ENCODE measurements at regions of chr3 and their contacts with region 1.

Region 1: DNA sequence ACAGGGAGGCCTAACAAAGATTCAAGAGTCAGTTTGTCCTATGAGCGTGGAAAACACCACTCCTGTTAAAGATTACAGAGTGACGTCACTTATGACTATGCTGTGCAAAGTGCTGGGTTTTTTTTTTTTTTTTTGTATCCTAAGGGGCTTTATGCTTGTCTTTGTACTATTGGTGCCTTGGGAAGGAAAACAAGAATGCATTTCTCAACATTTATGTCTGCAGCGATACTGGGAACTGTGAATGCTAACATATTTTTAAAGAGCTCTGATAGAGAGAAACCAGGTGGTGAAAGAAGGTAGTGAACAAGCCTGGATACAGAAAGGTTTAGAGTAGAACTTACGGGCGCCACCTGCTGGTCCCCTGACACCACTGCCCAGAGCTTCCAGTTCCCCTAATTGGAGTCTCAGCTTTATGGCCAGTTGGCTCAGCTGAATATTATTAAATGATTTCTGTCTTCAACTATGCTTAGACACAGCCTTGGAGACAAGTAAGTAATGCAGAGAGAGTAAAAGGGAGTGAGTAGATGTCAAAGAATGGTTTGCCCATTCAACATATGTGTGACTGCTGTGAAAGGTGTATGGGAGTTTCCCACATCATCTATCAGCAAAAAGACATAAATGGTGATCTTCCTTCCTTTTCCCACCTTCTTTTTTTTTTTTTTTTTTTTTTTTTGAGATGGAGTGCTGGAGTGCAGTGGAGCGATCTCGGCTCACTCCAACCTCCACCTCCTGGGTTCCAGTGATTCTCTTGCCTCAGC is 807.9 kb upstream of the CFAP20DC start:
- DNase-seq: no peak
- H3K4me3 ChIP-seq: no peak overlapping the region
- H3K27ac ChIP-seq: no peak overlapping the region
- H3K4me1 ChIP-seq: peaks cover 0 to 8% (median 0%) of the 10 kb centered on the region in 4 donors
- H3K27me3 ChIP-seq: no peaks in the 10 kb centered on the region
- CTCF ChIP-seq: peak; percentile 89 to 95 (median 91)
- EP300 ChIP-seq: no peak
- POLR2A ChIP-seq: no peak

Region 2: GRCh38 chr3:59212128-59212779 is 645.5 kb before region 1 on chr3:
- intact Hi-C with region 1: loop called (anchors 5 kb)
- DNase-seq: no peak
- H3K4me3 ChIP-seq: no peak overlapping the region
- H3K27ac ChIP-seq: no peak overlapping the region
- H3K4me1 ChIP-seq: no peaks in the 10 kb centered on the region
- H3K27me3 ChIP-seq: peaks cover 0 to 16% (median 0%) of the 10 kb centered on the region in 4 donors
- CTCF ChIP-seq: peak; percentile 67 to 71 (median 67)
- EP300 ChIP-seq: no peak
- POLR2A ChIP-seq: no peak

Region 3: GRCh38 chr3:59818033-59818920 is 39.5 kb before region 1 on chr3:
- intact Hi-C with region 1: no loop called
- DNase-seq: peak; percentile 94
- H3K4me3 ChIP-seq: peak overlapping the region in 3 of 4 donors; percentile 2 to 12 (median 10)
- H3K27ac ChIP-seq: peak overlapping the region; percentile 59 to 74 (median 68)
- H3K4me1 ChIP-seq: peaks cover 14 to 29% (median 24%) of the 10 kb centered on the region in 4 donors
- H3K27me3 ChIP-seq: no peaks in the 10 kb centered on the region
- CTCF ChIP-seq: no peak
- EP300 ChIP-seq: no peak
- POLR2A ChIP-seq: no peak

Region 4: GRCh38 chr3:60333710-60334109 is 475.9 kb after region 1 on chr3:
- intact Hi-C with region 1: no loop called
- DNase-seq: no peak
- H3K4me3 ChIP-seq: no peak overlapping the region
- H3K27ac ChIP-seq: no peak overlapping the region
- H3K4me1 ChIP-seq: no peaks in the 10 kb centered on the region
- H3K27me3 ChIP-seq: no peaks in the 10 kb centered on the region
- CTCF ChIP-seq: no peak
- EP300 ChIP-seq: no peak
- POLR2A ChIP-seq: no peak

Measured in esophagus muscularis mucosa (tissue), 4 donors.